ENCODE measurements at regions of chr7 and their contacts with region 1.

Region 1: GRCh38 chr7:76179686-76180085 is 22.0 kb upstream of the SRRM3 start:
- DNase-seq: no peak
- H3K4me3 ChIP-seq: no peak overlapping the region
- H3K27ac ChIP-seq: no peak overlapping the region
- H3K4me1 ChIP-seq: peaks cover 0 to 8% (median 2%) of the 10 kb centered on the region in 4 donors
- H3K27me3 ChIP-seq: no peaks in the 10 kb centered on the region
- CTCF ChIP-seq: no peak
- EP300 ChIP-seq: no peak
- POLR2A ChIP-seq: no peak

Region 2: DNA sequence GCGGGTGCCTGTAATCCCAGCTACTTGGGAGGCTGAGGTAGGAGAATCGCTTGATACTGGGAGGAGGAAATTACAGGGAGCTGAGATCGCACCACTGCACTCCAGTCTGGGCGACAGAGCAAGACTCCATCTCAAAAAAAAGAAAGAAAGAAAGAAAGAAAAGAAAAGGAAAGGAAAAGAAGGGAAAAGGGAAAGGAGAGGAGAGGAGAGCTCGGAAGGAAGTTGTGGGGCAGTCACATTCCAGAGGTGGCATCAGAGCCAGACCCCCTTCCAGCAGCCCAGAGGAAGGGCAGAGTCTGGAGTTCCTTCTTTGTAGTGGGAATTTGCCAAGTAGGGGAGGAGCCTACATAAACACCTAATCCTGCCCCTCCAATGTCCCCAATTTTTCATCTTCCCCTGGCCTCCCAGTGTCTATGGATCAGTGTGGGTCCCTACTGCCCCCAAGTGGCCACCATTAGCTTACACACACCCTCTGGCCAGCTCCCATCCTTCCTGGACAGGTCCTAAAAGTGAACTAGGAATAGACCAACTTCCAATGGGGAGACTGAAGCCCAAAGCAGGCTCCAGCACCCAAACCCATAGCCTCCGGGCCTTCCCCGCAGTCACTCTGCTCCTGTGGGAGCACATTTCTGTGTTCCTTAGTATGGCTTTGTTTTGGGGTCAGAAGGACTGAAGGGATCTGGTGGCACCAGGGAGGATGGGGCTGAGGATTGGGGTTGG is 83.2 kb after region 1 on chr7:
- in situ Hi-C with region 1: loop called in 1 of 4 experiments (anchors 10 kb)
- intact Hi-C with region 1: no loop called
- DNase-seq: peak; percentile 49
- H3K4me3 ChIP-seq: no peak overlapping the region
- H3K27ac ChIP-seq: no peak overlapping the region
- H3K4me1 ChIP-seq: peaks cover 0 to 21% (median 14%) of the 10 kb centered on the region in 4 donors
- H3K27me3 ChIP-seq: peaks cover 55% of the 10 kb centered on the region
- CTCF ChIP-seq: peak; percentile 52 to 65 (median 62)
- EP300 ChIP-seq: no peak
- POLR2A ChIP-seq: no peak

Region 3: GRCh38 chr7:76291343-76292212 is 111.9 kb after region 1 on chr7:
- in situ Hi-C with region 1: no loop called
- intact Hi-C with region 1: loop called (anchors 2 kb)
- DNase-seq: peak; percentile 92
- H3K4me3 ChIP-seq: peak overlapping the region in 3 of 4 donors; percentile 22 to 40 (median 24)
- H3K27ac ChIP-seq: peak overlapping the region; percentile 90 to 98 (median 92)
- H3K4me1 ChIP-seq: peaks cover 45 to 55% (median 51%) of the 10 kb centered on the region in 4 donors
- H3K27me3 ChIP-seq: no peaks in the 10 kb centered on the region
- CTCF ChIP-seq: peak; percentile 93 to 99 (median 98)
- EP300 ChIP-seq: no peak
- POLR2A ChIP-seq: peak; percentile 17

Region 4: GRCh38 chr7:76314042-76314721 is 134.5 kb after region 1 on chr7:
- in situ Hi-C with region 1: loop called in 3 of 4 experiments (anchors 5 to 10 kb)
- intact Hi-C with region 1: loop called (anchors 1 kb)
- DNase-seq: peak; percentile 98
- H3K4me3 ChIP-seq: no peak overlapping the region
- H3K27ac ChIP-seq: no peak overlapping the region
- H3K4me1 ChIP-seq: peaks cover 7 to 32% (median 21%) of the 10 kb centered on the region in 4 donors
- H3K27me3 ChIP-seq: no peaks in the 10 kb centered on the region
- CTCF ChIP-seq: peak; percentile 100
- EP300 ChIP-seq: no peak
- POLR2A ChIP-seq: no peak

Measured in transverse colon (tissue), 4 donors.